ENCODE measurements at regions of chr6 and their contacts with region 1.

Region 1: GRCh38 chr6:26183581-26184366 is 96.5 kb downstream of the HFE start:
- DNase-seq: peak; percentile 80
- H3K4me3 Mint-ChIP-seq: peak overlapping the region; percentile 85
- H3K27ac Mint-ChIP-seq: peak overlapping the region; percentile 95
- H3K4me1 Mint-ChIP-seq: peaks cover 37% of the 10 kb centered on the region
- H3K27me3 Mint-ChIP-seq: peaks cover under 1% of the 10 kb centered on the region

Region 2: DNA sequence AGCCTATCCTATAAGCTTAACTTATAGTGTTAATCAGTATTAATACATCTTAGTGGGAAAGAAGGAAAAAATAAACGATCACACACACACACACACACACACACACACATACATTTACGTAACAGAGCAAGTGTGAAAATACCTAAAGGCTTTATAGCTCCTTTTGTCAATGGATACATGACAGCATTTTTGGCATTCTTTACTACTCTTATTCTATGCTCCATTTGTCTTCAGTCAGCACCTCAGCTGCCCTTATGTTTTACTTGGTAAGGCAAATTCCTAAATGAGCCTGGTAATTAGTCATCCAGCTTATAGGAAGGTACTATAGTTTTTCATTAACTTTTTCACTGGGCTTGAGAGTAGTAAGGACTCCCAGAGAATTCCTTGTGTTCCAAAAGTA is 284.7 kb before region 1 on chr6:
- CTCF ChIA-PET with region 1: no interaction called
- POLR2A ChIA-PET with region 1: no interaction called
- intact Hi-C with region 1: no loop called
- DNase-seq: no peak
- H3K4me3 Mint-ChIP-seq: no peak overlapping the region
- H3K27ac Mint-ChIP-seq: no peak overlapping the region
- H3K4me1 Mint-ChIP-seq: peaks cover 6% of the 10 kb centered on the region
- H3K27me3 Mint-ChIP-seq: peaks cover 3% of the 10 kb centered on the region

Region 3: GRCh38 chr6:26204332-26205165 is 20.8 kb after region 1 on chr6:
- CTCF ChIA-PET with region 1: interaction called, 13 read pairs
- POLR2A ChIA-PET with region 1: interaction called, 258 read pairs
- intact Hi-C with region 1: loop called (anchors 1 kb)
- DNase-seq: peak; percentile 90
- H3K4me3 Mint-ChIP-seq: no peak overlapping the region
- H3K27ac Mint-ChIP-seq: no peak overlapping the region
- H3K4me1 Mint-ChIP-seq: peaks cover 21% of the 10 kb centered on the region
- H3K27me3 Mint-ChIP-seq: peaks cover 3% of the 10 kb centered on the region

Region 4: GRCh38 chr6:26322645-26323482 is 139.1 kb after region 1 on chr6:
- CTCF ChIA-PET with region 1: no interaction called
- POLR2A ChIA-PET with region 1: no interaction called
- intact Hi-C with region 1: loop called (anchors 5 kb)
- DNase-seq: peak; percentile 64
- H3K4me3 Mint-ChIP-seq: peak overlapping the region; percentile 82
- H3K27ac Mint-ChIP-seq: peak overlapping the region; percentile 80
- H3K4me1 Mint-ChIP-seq: peaks cover 21% of the 10 kb centered on the region
- H3K27me3 Mint-ChIP-seq: peaks cover 25% of the 10 kb centered on the region

Region 5: DNA sequence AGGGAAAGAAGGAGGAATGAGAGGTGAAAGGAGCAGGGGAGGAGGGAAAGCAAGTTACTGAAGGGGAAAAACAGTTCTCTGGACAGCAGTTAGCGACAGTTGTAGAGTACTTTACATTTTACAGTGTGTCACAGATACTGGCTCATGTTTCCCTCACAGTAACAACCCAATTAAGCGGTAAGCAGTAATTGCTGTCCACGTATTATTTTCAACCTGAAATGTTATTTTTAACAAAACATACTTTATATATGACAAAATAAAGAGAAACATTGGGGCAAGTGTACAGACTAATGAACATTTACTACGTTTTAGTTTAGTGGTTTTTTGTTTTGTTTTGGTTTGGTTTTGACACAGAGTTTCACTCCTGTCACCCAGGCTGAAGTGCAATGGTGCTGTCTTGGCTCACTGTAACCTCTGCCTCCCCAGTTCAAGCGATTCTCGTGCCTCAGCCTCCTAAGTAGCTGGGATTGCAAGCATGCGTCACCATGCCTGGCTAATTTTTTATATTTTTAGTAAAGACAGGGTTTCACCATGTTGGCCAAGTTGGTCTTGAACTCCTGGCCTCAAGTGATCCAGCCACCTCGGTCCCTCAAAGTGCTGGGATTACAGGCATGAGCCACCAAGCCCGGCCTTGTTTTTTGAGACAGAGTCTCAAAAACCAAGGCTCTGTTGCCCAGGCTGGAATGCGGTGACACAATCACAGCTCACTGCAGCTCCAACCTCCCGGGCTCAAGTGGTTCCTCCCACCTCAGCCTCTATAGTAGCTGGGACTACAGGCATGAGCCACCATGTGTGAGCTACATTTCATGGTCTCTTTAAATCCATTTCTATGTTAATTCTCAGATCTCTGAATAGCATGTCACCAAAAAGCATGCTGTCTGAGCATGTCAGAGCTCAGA is 158.6 kb after region 1 on chr6:
- CTCF ChIA-PET with region 1: no interaction called
- POLR2A ChIA-PET with region 1: no interaction called
- intact Hi-C with region 1: no loop called
- DNase-seq: peak; percentile 65
- H3K4me3 Mint-ChIP-seq: peak overlapping the region; percentile 76
- H3K27ac Mint-ChIP-seq: peak overlapping the region; percentile 69
- H3K4me1 Mint-ChIP-seq: peaks cover 8% of the 10 kb centered on the region
- H3K27me3 Mint-ChIP-seq: peaks cover 5% of the 10 kb centered on the region